ENCODE measurements at regions of chr1 and their contacts with region 1.

Region 1: DNA sequence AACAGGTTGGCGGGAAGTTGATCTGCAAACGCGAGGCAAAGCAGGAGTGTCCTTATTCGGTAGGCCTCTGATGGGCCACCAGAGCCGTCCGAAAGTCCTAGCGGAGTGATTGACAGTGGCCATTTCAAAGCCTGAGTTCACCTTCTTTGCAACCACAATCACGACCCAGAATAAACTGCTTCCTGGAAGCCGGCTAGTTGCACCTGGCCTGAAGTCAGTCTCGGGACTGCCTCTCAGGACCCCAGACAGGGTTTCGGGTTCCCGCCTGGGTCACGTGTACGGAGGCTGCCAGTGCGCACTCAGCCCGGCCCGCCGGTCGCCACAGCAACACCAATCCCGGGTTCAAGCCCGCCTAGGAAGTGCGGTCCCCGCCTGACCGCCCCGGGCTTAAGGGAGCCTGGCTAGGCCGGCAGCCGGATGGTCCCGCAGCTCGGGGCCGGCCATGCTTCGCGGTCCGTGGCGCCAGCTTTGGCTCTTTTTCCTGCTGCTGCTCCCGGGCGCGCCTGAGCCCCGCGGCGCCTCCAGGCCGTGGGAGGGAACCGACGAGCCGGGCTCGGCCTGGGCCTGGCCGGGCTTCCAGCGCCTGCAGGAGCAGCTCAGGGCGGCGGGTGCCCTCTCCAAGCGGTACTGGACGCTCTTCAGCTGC is at the start of gene TOR3A:
- DNase-seq: peak; percentile 75
- H3K4me3 Mint-ChIP-seq: peak within 1 kb of the TSS; percentile 97
- H3K27ac Mint-ChIP-seq: peak within 1 kb of the TSS; percentile 96
- H3K4me1 Mint-ChIP-seq: peaks cover 20% of the 10 kb centered on the region
- H3K27me3 Mint-ChIP-seq: no peaks in the 10 kb centered on the region
- total RNA-seq, gene TOR3A: 34.1 and 35.3 TPM in 2 replicates

Region 2: GRCh38 chr1:179025125-179025974 is 56.5 kb before region 1 on chr1 and contains the start of gene FAM20B:
- intact Hi-C with region 1: loop called (anchors 1 kb)
- DNase-seq: peak; percentile 84
- H3K4me3 Mint-ChIP-seq: peak within 1 kb of the TSS; percentile 93
- H3K27ac Mint-ChIP-seq: peak within 1 kb of the TSS; percentile 84
- H3K4me1 Mint-ChIP-seq: peaks cover 32% of the 10 kb centered on the region
- H3K27me3 Mint-ChIP-seq: peaks cover 15% of the 10 kb centered on the region
- total RNA-seq, gene FAM20B: 38.1 and 39.7 TPM in 2 replicates

Region 3: DNA sequence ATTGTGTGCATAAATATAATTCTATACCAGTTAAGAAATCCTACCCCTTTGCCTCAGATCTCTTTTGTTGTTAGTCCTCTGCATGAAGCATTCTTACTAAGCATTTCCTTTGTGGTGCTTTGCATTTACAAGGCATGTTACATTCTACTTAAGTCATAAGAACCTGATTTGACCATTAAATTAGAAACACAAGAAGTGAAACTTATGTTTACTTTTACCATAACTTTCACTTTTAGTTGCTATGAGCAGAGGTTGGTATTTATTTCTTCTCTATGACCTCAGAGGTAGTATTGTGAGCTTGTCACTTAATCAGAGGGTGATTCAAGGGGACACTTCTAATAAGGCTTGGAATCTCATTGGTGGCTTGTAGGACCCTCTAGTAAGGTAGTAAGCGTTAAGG is 47.1 kb before region 1 on chr1:
- intact Hi-C with region 1: loop called (anchors 2 kb)
- DNase-seq: no peak
- H3K4me3 Mint-ChIP-seq: no peak overlapping the region
- H3K27ac Mint-ChIP-seq: peak overlapping the region; percentile 82
- H3K4me1 Mint-ChIP-seq: peaks cover 77% of the 10 kb centered on the region
- H3K27me3 Mint-ChIP-seq: no peaks in the 10 kb centered on the region

Region 4: DNA sequence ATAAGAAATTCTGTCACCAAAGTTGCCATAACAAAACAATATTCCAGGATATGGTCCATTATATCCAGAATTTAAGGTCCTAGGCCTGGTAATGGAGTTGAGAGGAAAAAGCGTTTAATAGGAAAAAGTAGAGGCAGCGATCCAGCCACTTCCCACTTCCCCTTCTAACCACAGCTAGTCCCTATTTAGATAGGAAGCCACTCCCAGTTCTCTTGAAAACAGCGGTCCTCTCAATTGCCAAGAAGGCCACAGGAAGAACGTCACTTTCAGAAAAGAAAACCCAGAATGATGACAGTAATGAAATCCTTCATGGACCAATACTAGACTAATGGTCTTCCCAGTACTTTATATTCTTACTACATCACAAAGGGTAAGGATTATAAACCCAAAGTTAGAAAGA is 109.1 kb after region 1 on chr1:
- intact Hi-C with region 1: loop called (anchors 2 kb)
- DNase-seq: no peak
- H3K4me3 Mint-ChIP-seq: no peak overlapping the region
- H3K27ac Mint-ChIP-seq: peak overlapping the region; percentile 42
- H3K4me1 Mint-ChIP-seq: peaks cover 15% of the 10 kb centered on the region
- H3K27me3 Mint-ChIP-seq: no peaks in the 10 kb centered on the region

Measured in activated T-helper 2 cell treated with anti-CD3 and anti-CD28 coated beads, Interferon-gamma antibody, Interleukin-2, Interleukin-4, amounts not matched to agents 10 μg/mL and 5 μg/mL and 100 μg/mL, durations not matched to agents 14 hours and 24 hours and 36 hours (primary cell).